PC-3 (cell line): ENCODE measurements at regions of chr18 and their contacts with region 1.

Region 1: GRCh38 chr18:54828281-54828881 is at the start of gene RAB27B:
- DNase-seq: peak; percentile 89
- ATAC-seq: peak; percentile 89
- H3K4me3 ChIP-seq: peak within 1 kb of the TSS; percentile 77
- H3K27ac ChIP-seq: peak within 1 kb of the TSS; percentile 94
- H3K4me1 ChIP-seq: peaks cover 50% of the 10 kb centered on the region
- H3K27me3 ChIP-seq: no peaks in the 10 kb centered on the region
- CTCF ChIP-seq: no peak
- total RNA-seq, gene RAB27B: 10.3 and 13.2 TPM in 2 replicates

Region 2: DNA sequence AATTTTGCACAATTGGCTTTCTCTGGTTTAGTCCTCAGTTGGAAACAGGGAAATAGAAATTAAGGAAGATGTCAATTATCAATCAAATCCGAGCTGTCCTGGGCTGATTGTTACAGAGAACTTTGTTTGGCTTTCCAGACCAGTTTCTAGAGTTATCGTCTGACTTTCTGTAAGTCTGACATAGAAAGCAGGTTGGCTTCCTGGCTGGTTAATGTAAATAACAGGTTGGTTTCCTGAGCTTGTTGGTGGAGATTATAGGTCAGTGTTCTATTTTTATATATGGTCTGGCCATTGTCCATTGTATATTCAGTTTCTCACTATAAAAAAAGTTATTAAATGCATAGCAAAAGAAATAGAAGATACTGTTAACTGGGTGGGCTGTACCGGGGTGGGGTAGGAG is 808.7 kb before region 1 on chr18:
- CTCF ChIA-PET with region 1: no interaction called
- POLR2A ChIA-PET with region 1: interaction called, 21 read pairs
- intact Hi-C with region 1: no loop called
- DNase-seq: peak; percentile 6
- ATAC-seq: no peak
- H3K4me3 ChIP-seq: no peak overlapping the region
- H3K27ac ChIP-seq: no peak overlapping the region
- H3K4me1 ChIP-seq: peaks cover 21% of the 10 kb centered on the region
- H3K27me3 ChIP-seq: no peaks in the 10 kb centered on the region
- CTCF ChIP-seq: no peak

Region 3: DNA sequence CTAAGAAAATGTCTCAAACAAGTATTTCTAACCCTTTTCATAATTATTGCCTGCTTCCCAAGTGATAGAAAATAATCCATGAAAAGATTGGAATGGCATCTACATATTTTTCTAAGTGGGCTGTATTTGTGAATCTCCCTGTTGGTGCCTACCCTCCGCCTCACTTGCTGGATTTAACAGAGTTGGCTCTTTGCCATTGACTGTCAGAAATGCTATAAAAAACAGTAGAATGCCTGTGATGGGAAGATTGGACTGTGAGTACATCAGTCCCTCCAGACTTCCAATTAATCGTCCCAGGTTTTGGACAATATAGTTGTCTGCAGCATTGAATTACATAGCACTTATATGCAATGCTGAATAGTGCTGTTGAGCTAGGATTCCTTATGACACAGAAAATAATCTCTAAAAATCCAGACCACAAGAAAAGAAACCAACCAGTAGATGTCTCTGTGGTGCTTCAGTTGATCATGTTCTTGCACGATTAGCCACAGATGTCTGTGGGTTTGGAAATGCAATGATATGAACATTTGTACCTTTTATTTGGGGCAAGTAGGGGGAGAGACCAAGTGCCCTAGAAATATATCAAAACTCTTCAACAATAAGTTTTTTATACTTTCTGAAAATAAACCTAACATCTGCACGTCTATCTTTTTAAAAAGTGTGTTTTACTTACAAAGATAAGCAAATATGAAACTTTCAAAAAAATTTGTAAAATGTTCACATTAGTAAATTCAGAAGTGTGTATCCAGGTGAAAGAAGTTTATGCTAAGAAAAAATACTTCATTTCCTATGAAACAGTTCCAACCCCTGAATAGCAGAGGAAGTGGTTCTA is 148.8 kb before region 1 on chr18:
- CTCF ChIA-PET with region 1: no interaction called
- POLR2A ChIA-PET with region 1: no interaction called
- intact Hi-C with region 1: loop called (anchors 2 kb)
- DNase-seq: peak; percentile 88
- ATAC-seq: peak; percentile 93
- H3K4me3 ChIP-seq: no peak overlapping the region
- H3K27ac ChIP-seq: no peak overlapping the region
- H3K4me1 ChIP-seq: no peaks in the 10 kb centered on the region; the same call in 1 of the 2 replicates
- H3K27me3 ChIP-seq: no peaks in the 10 kb centered on the region
- CTCF ChIP-seq: peak; percentile 89

Region 4: GRCh38 chr18:54752185-54752584 is 76.2 kb before region 1 on chr18:
- CTCF ChIA-PET with region 1: no interaction called
- POLR2A ChIA-PET with region 1: no interaction called
- intact Hi-C with region 1: no loop called
- DNase-seq: no peak
- ATAC-seq: no peak
- H3K4me3 ChIP-seq: no peak overlapping the region
- H3K27ac ChIP-seq: no peak overlapping the region
- H3K4me1 ChIP-seq: no peaks in the 10 kb centered on the region
- H3K27me3 ChIP-seq: no peaks in the 10 kb centered on the region
- CTCF ChIP-seq: no peak

Region 5: DNA sequence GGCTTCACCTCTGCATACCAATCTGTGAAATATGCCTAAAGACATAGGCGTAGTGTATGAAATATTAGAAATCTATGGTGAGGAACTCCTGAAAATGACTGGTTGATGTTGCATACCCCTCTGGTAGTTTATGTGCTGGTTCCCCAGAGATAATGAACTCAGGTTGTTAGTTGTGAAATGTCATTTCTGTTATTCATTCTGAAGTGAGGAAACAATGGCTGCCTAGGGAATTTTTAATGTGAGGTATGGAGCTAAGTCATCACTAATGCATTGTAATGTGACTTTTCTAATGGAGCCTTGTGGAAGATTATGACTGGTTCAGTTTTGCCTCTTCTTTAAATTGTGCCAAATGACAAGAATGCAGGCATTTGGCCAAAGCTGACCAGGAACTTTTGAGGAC is 61.8 kb before region 1 on chr18:
- CTCF ChIA-PET with region 1: no interaction called
- POLR2A ChIA-PET with region 1: no interaction called
- intact Hi-C with region 1: loop called (anchors 2 kb)
- DNase-seq: peak; percentile 75
- ATAC-seq: peak; percentile 47
- H3K4me3 ChIP-seq: peak overlapping the region; percentile 54
- H3K27ac ChIP-seq: peak overlapping the region; percentile 99
- H3K4me1 ChIP-seq: peaks cover 56% of the 10 kb centered on the region
- H3K27me3 ChIP-seq: no peaks in the 10 kb centered on the region
- CTCF ChIP-seq: no peak

Region 6: GRCh38 chr18:54776282-54776977 is 52.0 kb before region 1 on chr18:
- CTCF ChIA-PET with region 1: no interaction called
- POLR2A ChIA-PET with region 1: interaction called, 4 read pairs
- intact Hi-C with region 1: loop called (anchors 1 kb)
- DNase-seq: peak; percentile 97
- ATAC-seq: peak; percentile 90
- H3K4me3 ChIP-seq: no peak overlapping the region; the same call in 1 of the 2 replicates
- H3K27ac ChIP-seq: peak overlapping the region; percentile 98
- H3K4me1 ChIP-seq: peaks cover 43% of the 10 kb centered on the region
- H3K27me3 ChIP-seq: no peaks in the 10 kb centered on the region
- CTCF ChIP-seq: no peak

Region 7: DNA sequence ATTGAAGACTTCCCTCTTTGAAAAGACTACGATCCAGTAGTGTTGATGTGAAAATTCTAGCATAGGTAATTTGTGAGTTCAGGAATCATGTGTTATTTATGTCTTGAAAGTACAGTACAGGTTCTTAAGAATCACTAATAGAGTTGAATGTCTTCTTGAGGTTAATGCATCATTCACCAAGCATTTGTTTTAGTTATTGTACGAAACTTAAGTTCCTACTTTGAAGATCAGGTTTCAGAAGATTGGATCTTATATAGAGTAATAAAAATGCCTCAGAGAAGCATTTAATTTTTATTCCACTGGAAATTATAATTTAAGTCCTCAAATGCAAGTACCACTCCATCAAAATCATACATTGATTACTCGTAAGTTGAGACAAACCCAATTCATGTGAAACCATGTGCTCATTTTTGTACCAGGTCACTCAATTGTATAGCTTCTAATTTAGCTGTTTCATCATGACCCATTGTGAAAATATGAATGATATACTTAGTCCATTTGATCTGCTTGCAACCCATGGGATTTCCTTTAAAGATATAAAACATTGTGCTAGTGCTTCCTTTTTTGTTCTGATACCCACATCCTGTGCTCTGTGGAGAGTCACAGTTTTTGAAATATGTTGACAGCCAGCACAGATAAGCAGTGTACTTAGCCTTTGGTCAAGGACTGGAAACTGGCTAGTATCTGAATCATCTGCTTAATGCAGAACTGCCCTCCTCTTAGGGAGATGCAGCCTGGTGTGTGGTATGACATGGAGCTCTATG is 22.6 kb before region 1 on chr18:
- CTCF ChIA-PET with region 1: no interaction called
- POLR2A ChIA-PET with region 1: no interaction called
- intact Hi-C with region 1: loop called (anchors 1 kb)
- DNase-seq: peak; percentile 81
- ATAC-seq: peak; percentile 93
- H3K4me3 ChIP-seq: no peak overlapping the region
- H3K27ac ChIP-seq: peak overlapping the region; percentile 86
- H3K4me1 ChIP-seq: peaks cover 25% of the 10 kb centered on the region
- H3K27me3 ChIP-seq: no peaks in the 10 kb centered on the region
- CTCF ChIP-seq: no peak

Region 8: DNA sequence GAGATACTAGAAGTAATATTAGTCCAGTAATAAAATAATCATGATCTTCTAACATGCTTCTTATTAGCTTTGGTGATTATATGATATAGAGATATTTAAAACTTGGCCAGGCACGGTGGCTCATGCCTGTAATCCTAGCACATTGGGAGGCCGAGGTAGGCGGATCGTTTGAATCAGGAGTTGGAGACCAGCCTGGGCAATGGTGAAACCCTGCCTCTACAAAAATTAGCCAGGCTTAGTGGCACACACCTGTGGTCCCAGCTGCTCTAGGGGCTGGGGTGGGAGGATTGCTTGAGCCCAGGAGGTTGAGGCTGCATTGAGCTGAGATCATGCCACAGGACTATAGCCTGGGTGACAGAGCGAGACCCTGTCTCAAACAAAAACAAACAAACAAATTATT is 1909.8 kb after region 1 on chr18:
- CTCF ChIA-PET with region 1: no interaction called
- POLR2A ChIA-PET with region 1: no interaction called
- intact Hi-C with region 1: no loop called
- DNase-seq: no peak
- ATAC-seq: no peak
- H3K4me3 ChIP-seq: no peak overlapping the region
- H3K27ac ChIP-seq: no peak overlapping the region
- H3K4me1 ChIP-seq: no peaks in the 10 kb centered on the region
- H3K27me3 ChIP-seq: no peaks in the 10 kb centered on the region
- CTCF ChIP-seq: no peak